ENCODE measurements at regions of chr20 and their contacts with region 1.

Region 1: GRCh38 chr20:57266291-57267157 is at the start of gene BMP7:
- DNase-seq: no peak
- H3K4me3 ChIP-seq: peak within 1 kb of the TSS; percentile 62 to 73 (median 66)
- H3K27ac ChIP-seq: peak within 1 kb of the TSS; percentile 16 to 83 (median 80)
- H3K4me1 ChIP-seq: peaks cover 12 to 57% (median 12%) of the 10 kb centered on the region in 3 donors
- H3K27me3 ChIP-seq: peaks cover 0 to 88% (median 0%) of the 10 kb centered on the region in 4 donors
- CTCF ChIP-seq: no peak
- POLR2A ChIP-seq: peak in 1 of 4 donors; percentile 51
- total RNA-seq, gene BMP7: 21.8 to 59.8 (median 35.1) TPM

Region 2: DNA sequence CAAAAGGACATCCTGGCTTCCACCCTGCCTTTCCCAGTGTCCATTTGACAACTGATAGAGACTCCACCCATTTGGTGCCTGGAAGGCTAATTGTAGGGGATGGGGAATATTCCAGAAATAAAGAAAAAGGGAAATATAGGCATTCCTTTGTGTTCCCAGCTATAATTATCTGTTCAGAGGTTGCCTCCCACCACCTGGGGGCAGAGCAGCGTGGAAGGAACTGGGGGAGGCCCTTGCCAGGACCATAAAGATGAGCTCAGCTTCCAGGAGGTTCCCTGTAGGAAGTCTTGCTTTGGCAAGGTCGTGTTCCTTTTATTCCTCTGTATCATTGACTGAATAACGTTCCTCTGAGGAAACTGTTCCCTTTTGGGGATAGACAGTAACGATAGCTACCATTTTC is 422.7 kb before region 1 on chr20:
- intact Hi-C with region 1: no loop called
- DNase-seq: no peak
- H3K4me3 ChIP-seq: no peak overlapping the region
- H3K27ac ChIP-seq: no peak overlapping the region
- H3K4me1 ChIP-seq: no peaks in the 10 kb centered on the region
- H3K27me3 ChIP-seq: peaks cover 0 to 6% (median 0%) of the 10 kb centered on the region in 4 donors
- CTCF ChIP-seq: peak in 2 of 6 experiments; percentile 11 to 22
- POLR2A ChIP-seq: no peak

Region 3: GRCh38 chr20:57323034-57323433 is 56.5 kb after region 1 on chr20:
- intact Hi-C with region 1: loop called (anchors 5 kb)
- DNase-seq: no peak
- H3K4me3 ChIP-seq: no peak overlapping the region
- H3K27ac ChIP-seq: peak overlapping the region; percentile 11 to 81 (median 66)
- H3K4me1 ChIP-seq: peaks cover 9 to 68% (median 24%) of the 10 kb centered on the region in 3 donors
- H3K27me3 ChIP-seq: peaks cover 0 to 22% (median 0%) of the 10 kb centered on the region in 4 donors
- CTCF ChIP-seq: no peak
- POLR2A ChIP-seq: no peak